WTC11 (cell line): ENCODE measurements at regions of chr11 and their contacts with region 1.

Region 1: DNA sequence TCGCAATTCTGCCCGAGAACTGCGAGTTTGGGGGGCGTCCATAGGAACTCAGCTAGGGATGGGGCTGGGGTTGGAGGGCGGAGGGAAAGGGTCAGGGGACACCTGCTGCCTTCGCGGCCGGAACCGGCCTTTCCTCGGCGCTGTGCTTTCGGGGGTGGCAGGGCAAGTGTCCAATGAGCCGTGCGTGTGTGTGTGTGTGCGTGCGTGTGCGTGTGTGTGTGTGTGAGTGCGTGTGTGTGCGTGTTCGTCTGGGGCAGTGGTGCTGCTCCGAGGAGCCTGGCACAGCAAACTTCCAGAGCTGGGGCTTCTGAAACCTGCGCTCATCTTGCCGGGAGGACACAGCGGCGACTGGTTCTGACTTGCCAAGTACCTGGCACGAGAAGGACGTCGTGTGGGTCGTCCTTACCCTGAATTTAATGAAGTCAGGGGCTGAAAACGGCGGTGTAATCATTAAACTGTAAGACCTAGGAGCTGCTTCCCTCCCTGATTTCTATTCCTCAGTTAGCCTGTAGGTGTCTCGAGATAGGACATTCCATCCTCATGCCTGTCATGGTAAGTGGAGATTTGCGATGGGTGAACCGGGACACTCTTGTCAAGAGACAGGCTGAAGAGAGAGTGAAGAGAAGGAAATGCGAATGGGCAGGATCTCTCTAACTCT is 27.0 kb upstream of the AMOTL1 start:
- DNase-seq: peak; percentile 27
- ATAC-seq: peak; percentile 82
- H3K4me3 Mint-ChIP-seq: peak overlapping the region; percentile 83
- H3K27ac Mint-ChIP-seq: no peak overlapping the region
- H3K4me1 Mint-ChIP-seq: peaks cover 28% of the 10 kb centered on the region
- H3K27me3 Mint-ChIP-seq: peaks cover 23% of the 10 kb centered on the region
- CTCF ChIP-seq: peak; percentile 33; the same call in 1 of the 2 replicates

Region 2: GRCh38 chr11:94656968-94657367 is 84.2 kb before region 1 on chr11:
- CTCF ChIA-PET with region 1: interaction called, 10 read pairs
- POLR2A ChIA-PET with region 1: interaction called, 3 read pairs
- DNase-seq: no peak
- ATAC-seq: peak; percentile 51
- H3K4me3 Mint-ChIP-seq: peak overlapping the region; percentile 20
- H3K27ac Mint-ChIP-seq: peak overlapping the region; percentile 89
- H3K4me1 Mint-ChIP-seq: peaks cover 95% of the 10 kb centered on the region
- H3K27me3 Mint-ChIP-seq: no peaks in the 10 kb centered on the region
- CTCF ChIP-seq: no peak

Region 3: GRCh38 chr11:94754335-94754734 is 13.2 kb after region 1 on chr11:
- CTCF ChIA-PET with region 1: interaction called, 13 read pairs
- POLR2A ChIA-PET with region 1: interaction called, 3 read pairs
- DNase-seq: no peak
- ATAC-seq: no peak
- H3K4me3 Mint-ChIP-seq: no peak overlapping the region
- H3K27ac Mint-ChIP-seq: no peak overlapping the region
- H3K4me1 Mint-ChIP-seq: peaks cover 42% of the 10 kb centered on the region
- H3K27me3 Mint-ChIP-seq: no peaks in the 10 kb centered on the region; the same call in 1 of the 2 replicates
- CTCF ChIP-seq: no peak

Region 4: GRCh38 chr11:94762208-94762607 is 21.1 kb after region 1 on chr11:
- CTCF ChIA-PET with region 1: interaction called, 11 read pairs
- POLR2A ChIA-PET with region 1: no interaction called
- DNase-seq: no peak
- ATAC-seq: peak; percentile 35
- H3K4me3 Mint-ChIP-seq: no peak overlapping the region
- H3K27ac Mint-ChIP-seq: no peak overlapping the region
- H3K4me1 Mint-ChIP-seq: peaks cover 30% of the 10 kb centered on the region
- H3K27me3 Mint-ChIP-seq: peaks cover 19% of the 10 kb centered on the region
- CTCF ChIP-seq: no peak

Region 5: GRCh38 chr11:94897330-94897768 is 156.2 kb after region 1 on chr11:
- CTCF ChIA-PET with region 1: interaction called, 10 read pairs
- POLR2A ChIA-PET with region 1: no interaction called
- DNase-seq: peak; percentile 64
- ATAC-seq: peak; percentile 73
- H3K4me3 Mint-ChIP-seq: no peak overlapping the region
- H3K27ac Mint-ChIP-seq: no peak overlapping the region
- H3K4me1 Mint-ChIP-seq: peaks cover 8% of the 10 kb centered on the region; the same call in 1 of the 2 replicates
- H3K27me3 Mint-ChIP-seq: no peaks in the 10 kb centered on the region
- CTCF ChIP-seq: peak; percentile 90